ENCODE measurements at regions of chr13 and their contacts with region 1.

Region 1: GRCh38 chr13:38866649-38867048 is 124.0 kb downstream of the STOML3 start:
- DNase-seq: no peak
- ATAC-seq: no peak
- H3K4me3 ChIP-seq: no peak overlapping the region
- H3K27ac ChIP-seq: no peak overlapping the region
- H3K4me1 ChIP-seq: no peaks in the 10 kb centered on the region
- H3K27me3 ChIP-seq: no peaks in the 10 kb centered on the region; the same call in none of the 2 replicates
- CTCF ChIP-seq: 0 out of 6 replicates have a peak, but pooled peaks of 1 of the 3 experiments have one; percentile 9
- POLR2A ChIP-seq: no peak
- RAD21 ChIP-seq: peak; percentile 32; the same call in 1 of the 2 replicates

Region 2: GRCh38 chr13:38602261-38602660 is 264.4 kb before region 1 on chr13:
- CTCF ChIA-PET with region 1: no interaction called
- POLR2A ChIA-PET with region 1: no interaction called
- RAD21 ChIA-PET with region 1: no interaction called
- intact Hi-C with region 1: no loop called
- DNase-seq: no peak
- ATAC-seq: no peak
- H3K4me3 ChIP-seq: no peak overlapping the region
- H3K27ac ChIP-seq: no peak overlapping the region
- H3K4me1 ChIP-seq: no peaks in the 10 kb centered on the region
- H3K27me3 ChIP-seq: no peaks in the 10 kb centered on the region
- CTCF ChIP-seq: no peak
- POLR2A ChIP-seq: no peak
- RAD21 ChIP-seq: no peak

Region 3: GRCh38 chr13:38914070-38914469 is 47.4 kb after region 1 on chr13:
- CTCF ChIA-PET with region 1: interaction called, 10 read pairs
- POLR2A ChIA-PET with region 1: no interaction called
- RAD21 ChIA-PET with region 1: no interaction called
- intact Hi-C with region 1: no loop called
- DNase-seq: no peak
- ATAC-seq: no peak
- H3K4me3 ChIP-seq: no peak overlapping the region
- H3K27ac ChIP-seq: no peak overlapping the region
- H3K4me1 ChIP-seq: no peaks in the 10 kb centered on the region
- H3K27me3 ChIP-seq: peaks cover 8% of the 10 kb centered on the region; the same call in 1 of the 2 replicates
- CTCF ChIP-seq: no peak
- POLR2A ChIP-seq: no peak
- RAD21 ChIP-seq: no peak

Region 4: GRCh38 chr13:39462428-39462827 is 595.8 kb after region 1 on chr13:
- CTCF ChIA-PET with region 1: no interaction called
- POLR2A ChIA-PET with region 1: no interaction called
- RAD21 ChIA-PET with region 1: no interaction called
- intact Hi-C with region 1: no loop called
- DNase-seq: no peak
- ATAC-seq: no peak
- H3K4me3 ChIP-seq: no peak overlapping the region
- H3K27ac ChIP-seq: no peak overlapping the region
- H3K4me1 ChIP-seq: no peaks in the 10 kb centered on the region
- H3K27me3 ChIP-seq: peaks cover 37% of the 10 kb centered on the region
- CTCF ChIP-seq: no peak
- POLR2A ChIP-seq: no peak
- RAD21 ChIP-seq: no peak

Measured in HCT116 (cell line).